ENCODE measurements at regions of chr4 and their contacts with region 1.

Region 1: GRCh38 chr4:94668724-94669123 is 89.0 kb upstream of the BMPR1B start:
- DNase-seq: no peak
- ATAC-seq: no peak
- H3K4me3 ChIP-seq: no peak overlapping the region
- H3K4me3 Mint-ChIP-seq: no peak overlapping the region
- H3K27ac ChIP-seq: no peak overlapping the region
- H3K27ac Mint-ChIP-seq: no peak overlapping the region
- H3K4me1 ChIP-seq: no peaks in the 10 kb centered on the region
- H3K4me1 Mint-ChIP-seq: no peaks in the 10 kb centered on the region
- H3K27me3 ChIP-seq: no peaks in the 10 kb centered on the region
- H3K27me3 Mint-ChIP-seq: no peaks in the 10 kb centered on the region

Region 2: GRCh38 chr4:94686086-94686485 is 17.4 kb after region 1 on chr4:
- CTCF ChIA-PET with region 1: no interaction called
- POLR2A ChIA-PET with region 1: interaction called in 1 of 2 experiments, 11 read pairs
- DNase-seq: no peak
- ATAC-seq: no peak
- H3K4me3 ChIP-seq: no peak overlapping the region
- H3K4me3 Mint-ChIP-seq: no peak overlapping the region
- H3K27ac ChIP-seq: no peak overlapping the region
- H3K27ac Mint-ChIP-seq: no peak overlapping the region
- H3K4me1 ChIP-seq: no peaks in the 10 kb centered on the region
- H3K4me1 Mint-ChIP-seq: no peaks in the 10 kb centered on the region
- H3K27me3 ChIP-seq: no peaks in the 10 kb centered on the region
- H3K27me3 Mint-ChIP-seq: peaks cover 2% of the 10 kb centered on the region in 2 donors

Region 3: DNA sequence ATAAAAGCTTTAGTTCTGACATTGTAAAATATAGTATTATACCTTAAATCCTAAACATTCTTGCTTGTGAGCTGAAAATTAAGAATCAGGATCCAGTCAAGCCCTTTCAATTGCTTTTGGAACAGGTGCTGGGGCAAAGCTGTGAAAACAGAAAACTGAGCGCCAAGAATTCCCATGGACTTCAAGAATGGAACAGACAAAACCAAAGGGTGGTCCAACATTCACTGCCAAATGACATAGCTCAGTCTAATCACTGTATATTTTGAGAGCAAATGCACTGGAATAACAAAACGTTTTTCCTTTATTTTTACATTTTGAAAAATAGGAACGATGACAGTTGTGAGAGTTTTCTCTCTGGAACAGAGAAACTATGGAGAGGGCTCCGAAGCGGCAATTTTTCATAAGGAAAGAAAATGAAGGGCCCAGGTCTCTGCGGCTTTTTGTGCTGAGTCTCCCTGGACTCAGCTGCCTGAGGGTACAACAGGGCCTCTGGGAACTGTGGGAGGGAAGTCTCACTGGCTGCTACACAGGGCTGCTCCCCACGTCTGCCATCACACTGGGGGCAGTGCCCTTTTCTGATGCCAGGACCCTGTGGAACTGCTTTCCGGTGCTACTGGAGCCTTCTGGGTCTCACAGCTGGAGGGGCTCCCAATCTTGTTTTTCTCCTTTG is 33.0 kb after region 1 on chr4:
- CTCF ChIA-PET with region 1: no interaction called
- POLR2A ChIA-PET with region 1: no interaction called
- DNase-seq: no peak
- ATAC-seq: no peak
- H3K4me3 ChIP-seq: no peak overlapping the region
- H3K4me3 Mint-ChIP-seq: no peak overlapping the region
- H3K27ac ChIP-seq: no peak overlapping the region
- H3K27ac Mint-ChIP-seq: no peak overlapping the region
- H3K4me1 ChIP-seq: no peaks in the 10 kb centered on the region
- H3K4me1 Mint-ChIP-seq: no peaks in the 10 kb centered on the region
- H3K27me3 ChIP-seq: peaks cover 0 to 4% of the 10 kb centered on the region in 2 experiments
- H3K27me3 Mint-ChIP-seq: peaks cover 0 to 1% of the 10 kb centered on the region in 2 donors

Region 4: DNA sequence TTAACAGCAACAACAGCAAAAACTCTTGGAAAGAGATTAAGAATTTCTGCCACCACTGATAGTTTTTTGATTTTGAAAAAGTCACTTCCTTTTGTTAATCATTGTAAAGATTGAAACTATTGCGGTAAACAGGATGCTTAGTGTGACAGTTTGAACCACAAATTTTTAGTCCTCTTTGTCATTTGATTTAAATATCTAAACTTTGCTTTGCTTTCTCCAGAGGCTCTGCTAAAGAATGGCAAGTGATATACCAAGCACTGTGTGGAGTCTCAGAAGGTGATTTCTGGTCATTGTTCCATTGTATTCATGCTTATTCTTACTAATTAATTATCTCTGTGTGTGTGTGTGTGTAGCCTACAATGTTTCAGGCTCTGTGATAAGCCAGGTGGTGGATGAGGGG is 244.6 kb after region 1 on chr4:
- CTCF ChIA-PET with region 1: no interaction called
- POLR2A ChIA-PET with region 1: no interaction called
- DNase-seq: no peak
- ATAC-seq: peak in 2 of 4 experiments; percentile 23 to 24
- H3K4me3 ChIP-seq: no peak overlapping the region
- H3K4me3 Mint-ChIP-seq: no peak overlapping the region
- H3K27ac ChIP-seq: peak overlapping the region; percentile 39
- H3K27ac Mint-ChIP-seq: peak overlapping the region; percentile 73 to 78
- H3K4me1 ChIP-seq: peaks cover 0 to 4% of the 10 kb centered on the region in 2 experiments
- H3K4me1 Mint-ChIP-seq: peaks cover 11 to 23% (median 21%) of the 10 kb centered on the region in 3 donors
- H3K27me3 ChIP-seq: no peaks in the 10 kb centered on the region
- H3K27me3 Mint-ChIP-seq: no peaks in the 10 kb centered on the region